Posterior vena cava (tissue), 2 donors: ENCODE measurements at regions of chr3 and their contacts with region 1.

Region 1: DNA sequence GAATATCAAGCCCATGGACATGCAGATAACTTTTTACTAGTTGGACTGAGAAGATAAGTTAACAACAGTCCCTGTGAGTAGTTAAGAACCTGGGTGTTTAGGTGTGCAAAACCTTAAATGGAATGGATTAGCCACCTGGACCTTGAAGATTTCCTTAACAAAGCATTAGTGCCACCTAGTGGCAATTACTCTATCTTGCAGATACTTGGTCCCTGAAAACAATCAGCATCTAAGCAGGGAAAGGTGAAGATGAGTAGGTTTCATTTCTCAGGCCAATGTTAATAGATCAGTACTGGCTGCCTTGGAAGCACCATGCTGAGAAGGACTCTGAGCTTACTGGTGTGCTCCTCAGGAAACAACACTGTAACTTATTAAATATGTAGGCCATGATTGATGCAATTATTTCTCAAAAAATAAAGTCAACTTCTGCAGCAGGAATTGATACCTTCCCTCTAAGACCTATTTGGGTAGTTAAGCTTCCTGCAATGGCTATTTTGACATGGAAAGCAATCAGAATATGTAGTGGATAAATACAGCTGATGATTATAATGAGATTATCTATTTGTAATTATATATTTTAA is 329.4 kb downstream of the TBC1D5 start:
- DNase-seq: no peak

Region 2: GRCh38 chr3:17261633-17262369 is 151.2 kb before region 1 on chr3:
- intact Hi-C with region 1: loop called in 1 of 2 experiments (anchors 10 kb)
- DNase-seq: no peak